GM12878 (cell line): ENCODE measurements at regions of chr2 and their contacts with region 1.

Region 1: GRCh38 chr2:209334198-209335017 is 89.4 kb upstream of the MAP2 start:
- DNase-seq: no peak
- ATAC-seq: peak; percentile 85
- H3K4me3 ChIP-seq: no peak overlapping the region
- H3K27ac ChIP-seq: no peak overlapping the region
- H3K4me1 ChIP-seq: no peaks in the 10 kb centered on the region
- H3K27me3 ChIP-seq: no peaks in the 10 kb centered on the region
- CTCF ChIP-seq: peak; percentile 69 to 89 (median 83)
- EP300 ChIP-seq: no peak
- POLR2A ChIP-seq: no peak
- RAD21 ChIP-seq: peak; percentile 96

Region 2: DNA sequence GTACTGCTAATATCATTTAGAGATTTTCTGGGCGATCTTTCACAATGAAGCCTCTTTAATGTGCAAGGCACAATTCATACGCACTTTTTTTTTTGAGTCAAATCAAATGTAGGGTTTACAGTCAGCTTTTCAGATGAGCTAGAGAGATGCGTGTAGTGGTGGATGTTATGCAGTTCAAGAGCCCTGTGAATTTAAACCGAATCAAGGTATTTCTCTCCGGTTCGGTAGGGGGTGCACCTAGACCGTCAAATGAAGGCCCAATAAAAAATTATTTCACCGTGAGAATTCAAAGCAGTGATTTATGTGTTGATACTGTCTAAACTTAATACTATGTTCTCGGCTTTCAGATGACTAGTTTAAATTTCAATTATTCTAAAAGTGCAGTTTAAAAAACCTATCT is 926.7 kb before region 1 on chr2:
- CTCF ChIA-PET with region 1: interaction called, 8 read pairs
- POLR2A ChIA-PET with region 1: no interaction called
- RAD21 ChIA-PET with region 1: no interaction called
- SMC1A ChIA-PET with region 1: no interaction called
- in situ Hi-C with region 1: loop called (anchors 10 kb)
- intact Hi-C with region 1: no loop called
- DNase-seq: no peak
- ATAC-seq: peak; percentile 73
- H3K4me3 ChIP-seq: no peak overlapping the region
- H3K27ac ChIP-seq: no peak overlapping the region
- H3K4me1 ChIP-seq: no peaks in the 10 kb centered on the region
- H3K27me3 ChIP-seq: peaks cover 0 to 4% of the 10 kb centered on the region in 2 experiments; a peak in 3 of 4 replicates
- CTCF ChIP-seq: peak; percentile 15 to 61 (median 23); a peak in 4 of 6 replicates
- EP300 ChIP-seq: no peak
- POLR2A ChIP-seq: no peak
- RAD21 ChIP-seq: peak; percentile 60

Region 3: DNA sequence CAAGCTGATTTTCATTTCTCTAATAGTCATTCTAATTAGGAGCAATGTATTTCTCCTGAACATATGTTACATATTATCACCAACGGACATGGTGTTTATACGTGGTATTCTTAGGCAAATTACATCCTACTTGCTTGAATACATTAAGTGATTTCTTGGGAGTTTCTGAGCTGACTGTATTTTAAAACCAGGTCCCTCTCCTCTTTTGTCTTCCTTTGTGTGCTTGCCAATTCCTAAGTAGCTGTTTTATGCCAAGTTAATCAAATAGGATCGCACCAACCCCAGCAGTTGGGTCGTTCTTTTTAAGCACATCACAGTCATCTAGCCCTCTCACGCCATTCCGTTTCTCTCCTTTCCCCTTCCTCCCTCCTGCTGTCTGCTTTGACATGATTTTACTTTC is 14.0 kb after region 1 on chr2:
- CTCF ChIA-PET with region 1: interaction called, 27 read pairs
- POLR2A ChIA-PET with region 1: no interaction called
- RAD21 ChIA-PET with region 1: interaction called, 4 read pairs
- SMC1A ChIA-PET with region 1: interaction called, 9 read pairs
- in situ Hi-C with region 1: no loop called
- intact Hi-C with region 1: no loop called
- DNase-seq: no peak
- ATAC-seq: no peak
- H3K4me3 ChIP-seq: no peak overlapping the region
- H3K27ac ChIP-seq: no peak overlapping the region
- H3K4me1 ChIP-seq: no peaks in the 10 kb centered on the region
- H3K27me3 ChIP-seq: no peaks in the 10 kb centered on the region
- CTCF ChIP-seq: no peak
- EP300 ChIP-seq: no peak
- POLR2A ChIP-seq: no peak
- RAD21 ChIP-seq: no peak

Region 4: GRCh38 chr2:209423562-209424198 is 89.3 kb after region 1 on chr2 and contains the start of gene MAP2:
- CTCF ChIA-PET with region 1: interaction called, 30 read pairs
- POLR2A ChIA-PET with region 1: no interaction called
- RAD21 ChIA-PET with region 1: interaction called, 4 read pairs
- SMC1A ChIA-PET with region 1: interaction called, 13 read pairs
- in situ Hi-C with region 1: no loop called
- intact Hi-C with region 1: loop called (anchors 2 kb)
- DNase-seq: no peak
- ATAC-seq: peak; percentile 99
- H3K4me3 ChIP-seq: peak within 1 kb of the TSS; percentile 25; the same call in 1 of the 2 replicates
- H3K27ac ChIP-seq: no peak within 1 kb of the TSS
- H3K4me1 ChIP-seq: peaks cover 3% of the 10 kb centered on the region; the same call in 1 of the 2 replicates
- H3K27me3 ChIP-seq: no peaks in the 10 kb centered on the region; a peak in 2 of 4 replicates
- CTCF ChIP-seq: peak; percentile 52 to 86 (median 75)
- EP300 ChIP-seq: no peak
- POLR2A ChIP-seq: no peak
- RAD21 ChIP-seq: no peak
- polyA plus RNA-seq, gene MAP2: not detected

Region 5: DNA sequence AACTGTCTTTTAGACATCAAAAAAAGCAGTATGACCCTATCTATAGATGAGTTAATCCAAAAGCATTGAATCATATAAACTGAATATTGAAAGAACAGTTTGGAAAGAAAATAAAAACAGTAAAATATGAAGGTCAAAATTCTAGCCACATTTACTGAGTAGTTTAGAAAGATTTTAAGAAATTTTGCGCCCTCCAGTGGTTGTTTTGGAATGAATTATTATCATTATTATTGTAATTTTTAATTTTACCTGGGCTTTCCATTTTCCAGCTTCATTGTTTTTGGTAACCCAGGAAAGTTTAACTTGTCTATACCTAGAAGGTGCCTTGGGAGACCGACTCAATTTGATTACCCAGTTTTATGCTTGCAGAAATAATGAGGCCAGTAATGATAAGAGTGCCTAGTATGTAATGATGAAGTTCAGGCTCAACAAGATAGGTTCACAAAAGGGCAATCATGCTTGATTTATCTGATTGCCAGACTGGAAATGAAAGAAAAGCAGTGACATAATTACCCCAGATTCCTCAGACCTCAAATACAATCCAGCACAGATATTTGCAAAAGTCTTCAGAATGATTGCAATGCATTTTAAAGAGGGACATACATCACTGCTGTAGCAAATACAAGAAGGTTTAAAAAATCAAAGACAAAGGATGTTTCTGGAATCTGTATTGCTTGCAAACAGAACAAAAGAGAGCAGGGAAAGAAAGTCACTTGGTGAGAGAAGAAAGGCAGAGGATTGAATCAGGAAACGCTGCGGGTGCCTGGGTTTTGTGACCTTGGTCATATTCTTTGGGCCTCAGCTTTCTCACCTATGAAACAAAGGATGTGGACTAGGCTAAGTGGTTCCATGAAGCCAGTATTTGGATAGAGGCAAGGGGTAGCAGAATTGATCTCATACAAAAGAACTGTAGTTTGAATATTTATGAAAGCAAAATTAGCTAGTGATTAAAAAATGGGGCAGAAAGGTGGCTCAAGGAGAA is 243.3 kb after region 1 on chr2:
- CTCF ChIA-PET with region 1: interaction called, 85 read pairs
- POLR2A ChIA-PET with region 1: no interaction called
- RAD21 ChIA-PET with region 1: interaction called, 31 read pairs
- SMC1A ChIA-PET with region 1: interaction called, 33 read pairs
- in situ Hi-C with region 1: no loop called
- intact Hi-C with region 1: loop called (anchors 1 kb)
- DNase-seq: no peak
- ATAC-seq: no peak
- H3K4me3 ChIP-seq: no peak overlapping the region
- H3K27ac ChIP-seq: no peak overlapping the region
- H3K4me1 ChIP-seq: no peaks in the 10 kb centered on the region
- H3K27me3 ChIP-seq: no peaks in the 10 kb centered on the region
- CTCF ChIP-seq: peak; percentile 9 to 33 (median 29); a peak in 2 of 6 replicates
- EP300 ChIP-seq: no peak
- POLR2A ChIP-seq: no peak
- RAD21 ChIP-seq: peak; percentile 28; the same call in 1 of the 2 replicates

Region 6: GRCh38 chr2:210195101-210195852 is 860.9 kb after region 1 on chr2:
- CTCF ChIA-PET with region 1: interaction called, 21 read pairs
- POLR2A ChIA-PET with region 1: no interaction called
- RAD21 ChIA-PET with region 1: interaction called, 17 read pairs
- SMC1A ChIA-PET with region 1: interaction called, 9 read pairs
- in situ Hi-C with region 1: loop called (anchors 25 kb)
- intact Hi-C with region 1: loop called (anchors 5 kb)
- DNase-seq: no peak
- ATAC-seq: peak; percentile 69
- H3K4me3 ChIP-seq: no peak overlapping the region
- H3K27ac ChIP-seq: no peak overlapping the region
- H3K4me1 ChIP-seq: no peaks in the 10 kb centered on the region
- H3K27me3 ChIP-seq: no peaks in the 10 kb centered on the region
- CTCF ChIP-seq: peak; percentile 52 to 77 (median 55)
- EP300 ChIP-seq: no peak
- POLR2A ChIP-seq: no peak
- RAD21 ChIP-seq: peak; percentile 89